Heart left ventricle (tissue), 16 donors: ENCODE measurements at regions of chr11 and their contacts with region 1.

Region 1: GRCh38 chr11:48354677-48355076 is 11.6 kb downstream of the OR4C5 start:
- DNase-seq: no peak
- ATAC-seq: peak in 2 of 4 donors; percentile 78 to 81
- H3K4me3 ChIP-seq: no peak overlapping the region
- H3K27ac ChIP-seq: no peak overlapping the region
- H3K4me1 ChIP-seq: no peaks in the 10 kb centered on the region
- H3K27me3 ChIP-seq: no peaks in the 10 kb centered on the region
- CTCF ChIP-seq: no peak
- POLR2A ChIP-seq: no peak

Region 2: DNA sequence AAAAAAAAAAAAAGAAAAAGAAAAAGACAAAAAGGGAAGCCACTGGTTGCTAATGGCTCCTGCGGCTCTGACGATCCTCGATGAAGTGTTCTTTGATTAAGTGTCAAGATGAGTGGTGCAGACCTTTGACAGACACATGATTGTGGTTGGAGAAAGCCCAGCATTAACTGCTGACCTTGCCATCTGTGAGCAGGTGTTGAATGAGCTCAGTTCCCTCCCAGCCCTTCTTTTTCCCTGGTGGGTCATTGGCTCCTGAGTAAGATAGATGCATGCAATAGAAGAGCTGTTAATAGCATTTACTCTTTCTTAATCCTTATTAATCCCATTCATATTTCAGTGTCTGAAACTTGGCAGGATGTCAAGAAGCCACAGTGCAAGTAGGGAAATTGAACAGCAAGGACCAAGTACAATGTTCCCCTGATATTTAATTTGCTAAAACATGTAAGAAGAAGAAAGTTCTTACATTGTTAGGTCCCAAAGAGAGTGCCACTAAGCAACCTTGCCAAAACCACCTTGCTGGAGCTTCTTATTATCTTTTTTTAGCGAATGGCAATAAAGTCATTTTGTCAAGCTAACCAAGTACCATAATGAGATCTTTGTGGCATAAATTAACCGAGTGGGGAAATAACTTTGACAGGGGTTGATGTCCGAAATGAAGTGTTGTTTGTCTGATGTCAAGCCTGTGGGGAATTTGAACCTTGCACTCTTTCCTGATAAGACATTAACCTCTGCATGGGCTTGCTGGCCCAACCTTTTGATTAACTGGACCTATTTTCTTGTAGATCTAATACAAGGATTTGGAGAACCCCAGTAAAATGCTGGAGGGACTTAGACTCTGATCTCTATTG is 260.7 kb before region 1 on chr11:
- intact Hi-C with region 1: no loop called
- DNase-seq: peak in 2 of 5 donors; percentile 40 to 44
- ATAC-seq: peak; percentile 59 to 90 (median 83)
- H3K4me3 ChIP-seq: no peak overlapping the region
- H3K27ac ChIP-seq: peak overlapping the region in 1 of 12 donors; percentile 3
- H3K4me1 ChIP-seq: peaks cover 0 to 37% (median 10%) of the 10 kb centered on the region in 12 donors
- H3K27me3 ChIP-seq: no peaks in the 10 kb centered on the region
- CTCF ChIP-seq: no peak
- POLR2A ChIP-seq: no peak

Region 3: GRCh38 chr11:50030193-50030592 is 1675.5 kb after region 1 on chr11:
- intact Hi-C with region 1: loop called in 5 of 10 experiments (anchors 5 to 10 kb)
- DNase-seq: no peak
- ATAC-seq: peak; percentile 55 to 94 (median 84)
- H3K4me3 ChIP-seq: no peak overlapping the region
- H3K27ac ChIP-seq: no peak overlapping the region
- H3K4me1 ChIP-seq: peaks cover 0 to 3% (median 0%) of the 10 kb centered on the region in 12 donors
- H3K27me3 ChIP-seq: no peaks in the 10 kb centered on the region
- CTCF ChIP-seq: no peak
- POLR2A ChIP-seq: no peak